ENCODE measurements at regions of chr15 and their contacts with region 1.

Region 1: DNA sequence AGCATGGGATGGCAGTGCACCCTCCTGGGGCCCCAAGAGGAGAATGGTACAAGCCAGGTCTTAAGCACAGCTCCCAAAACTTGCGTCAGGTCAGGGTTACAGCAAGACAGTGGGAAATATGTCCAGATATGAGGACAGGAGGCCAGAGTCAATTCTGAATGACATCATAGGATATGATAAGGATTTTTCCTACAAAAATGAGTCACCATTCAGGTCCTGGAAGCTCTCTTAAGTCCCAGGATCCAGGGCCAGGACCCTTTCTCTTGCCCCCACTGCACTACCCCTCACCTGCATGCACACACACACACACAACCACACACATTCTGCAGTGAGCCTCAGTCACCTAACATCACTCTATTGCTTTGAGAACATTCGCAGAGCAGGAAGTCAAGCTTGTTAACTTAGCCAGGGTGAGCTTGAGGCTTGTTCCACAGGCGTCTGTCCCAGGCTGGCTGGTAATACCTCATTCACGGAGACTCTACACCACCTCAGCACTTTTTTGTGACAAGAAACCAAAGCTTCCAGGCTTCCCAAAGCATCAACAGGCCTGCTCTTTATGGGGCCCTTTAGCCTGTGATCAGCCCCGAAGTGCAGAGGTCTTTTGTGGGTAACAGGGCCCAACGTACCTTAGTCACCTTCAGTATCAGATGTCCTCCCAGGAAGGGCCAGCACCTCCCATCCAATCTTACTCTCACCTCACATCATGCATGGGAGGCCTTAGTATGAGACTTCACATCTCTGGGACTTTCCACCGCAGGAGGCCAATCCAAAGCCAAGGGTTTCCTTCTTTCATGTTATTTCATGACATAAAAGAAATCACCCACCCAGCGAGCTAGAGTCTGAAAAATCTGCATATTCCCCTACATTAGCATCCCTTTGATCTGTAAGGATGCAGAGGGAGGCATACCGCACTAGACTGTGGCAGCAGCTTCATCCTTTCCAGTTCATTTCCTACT is 74.0 kb upstream of the LIPC start:
- DNase-seq: no peak
- ATAC-seq: no peak
- H3K4me3 ChIP-seq: no peak overlapping the region
- H3K27ac ChIP-seq: no peak overlapping the region
- H3K4me1 ChIP-seq: no peaks in the 10 kb centered on the region
- H3K27me3 ChIP-seq: no peaks in the 10 kb centered on the region
- CTCF ChIP-seq: no peak

Region 2: GRCh38 chr15:58393241-58393662 is 35.5 kb after region 1 on chr15:
- intact Hi-C with region 1: loop called in 1 of 2 experiments (anchors 5 kb)
- DNase-seq: no peak
- ATAC-seq: no peak
- H3K4me3 ChIP-seq: no peak overlapping the region
- H3K27ac ChIP-seq: no peak overlapping the region
- H3K4me1 ChIP-seq: no peaks in the 10 kb centered on the region
- H3K27me3 ChIP-seq: peaks cover 0 to 1% (median 0%) of the 10 kb centered on the region in 3 donors
- CTCF ChIP-seq: no peak